SK-N-SH (cell line): ENCODE measurements at regions of chr2 and their contacts with region 1.

Region 1: GRCh38 chr2:198127627-198128026 is 323.2 kb downstream of the PLCL1 start:
- DNase-seq: peak; percentile 26
- H3K4me3 ChIP-seq: no peak overlapping the region
- H3K27ac ChIP-seq: no peak overlapping the region
- H3K4me1 ChIP-seq: no peaks in the 10 kb centered on the region; a peak in 2 of 4 replicates
- H3K27me3 ChIP-seq: no peaks in the 10 kb centered on the region
- CTCF ChIP-seq: peak; percentile 73
- EP300 ChIP-seq: no peak
- RAD21 ChIP-seq: peak; percentile 92

Region 2: DNA sequence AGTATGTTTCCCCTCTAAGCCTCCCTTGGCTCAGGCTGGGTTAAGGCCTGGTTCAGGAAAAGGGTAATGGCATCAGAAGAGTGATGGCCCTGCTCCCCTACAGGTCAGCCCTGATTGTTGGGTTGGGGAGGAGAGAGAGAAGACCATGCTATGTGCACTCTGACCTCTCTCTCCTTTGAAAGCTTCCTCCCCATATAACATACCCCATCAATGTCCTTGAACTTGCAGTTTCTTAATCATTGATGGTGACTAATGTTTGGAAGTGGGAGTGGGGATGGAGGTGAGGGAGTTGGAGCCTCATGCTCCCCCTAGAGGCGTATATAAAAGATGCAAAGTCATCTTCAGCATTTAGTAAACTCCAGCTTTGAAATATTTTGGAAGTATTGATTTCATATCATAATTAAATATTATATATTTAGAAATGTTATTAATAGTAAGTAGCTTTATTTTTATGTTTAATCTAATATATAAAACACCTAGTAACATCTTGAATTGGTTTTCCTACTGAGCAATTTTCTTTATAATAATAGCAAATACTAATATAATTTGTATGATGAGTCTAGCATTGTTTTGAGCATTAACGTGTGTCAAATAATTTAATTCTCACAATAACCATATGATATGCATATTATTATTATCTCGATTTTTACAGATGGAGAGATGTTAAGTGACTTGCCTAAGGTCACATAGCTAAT is 314.4 kb before region 1 on chr2:
- CTCF ChIA-PET with region 1: interaction called, 15 read pairs
- POLR2A ChIA-PET with region 1: no interaction called
- DNase-seq: peak; percentile 36
- H3K4me3 ChIP-seq: no peak overlapping the region
- H3K27ac ChIP-seq: no peak overlapping the region
- H3K4me1 ChIP-seq: no peaks in the 10 kb centered on the region
- H3K27me3 ChIP-seq: no peaks in the 10 kb centered on the region
- CTCF ChIP-seq: peak; percentile 65
- EP300 ChIP-seq: no peak
- RAD21 ChIP-seq: peak; percentile 35; the same call in 1 of the 2 replicates

Region 3: GRCh38 chr2:198116756-198117155 is 10.9 kb before region 1 on chr2:
- CTCF ChIA-PET with region 1: interaction called, 27 read pairs
- POLR2A ChIA-PET with region 1: no interaction called
- DNase-seq: no peak
- H3K4me3 ChIP-seq: no peak overlapping the region
- H3K27ac ChIP-seq: peak overlapping the region in 1 of 2 experiments; percentile 65; a peak in 2 of 4 replicates
- H3K4me1 ChIP-seq: peaks cover 11 to 15% of the 10 kb centered on the region in 2 experiments
- H3K27me3 ChIP-seq: no peaks in the 10 kb centered on the region
- CTCF ChIP-seq: no peak
- EP300 ChIP-seq: no peak
- RAD21 ChIP-seq: no peak

Region 4: DNA sequence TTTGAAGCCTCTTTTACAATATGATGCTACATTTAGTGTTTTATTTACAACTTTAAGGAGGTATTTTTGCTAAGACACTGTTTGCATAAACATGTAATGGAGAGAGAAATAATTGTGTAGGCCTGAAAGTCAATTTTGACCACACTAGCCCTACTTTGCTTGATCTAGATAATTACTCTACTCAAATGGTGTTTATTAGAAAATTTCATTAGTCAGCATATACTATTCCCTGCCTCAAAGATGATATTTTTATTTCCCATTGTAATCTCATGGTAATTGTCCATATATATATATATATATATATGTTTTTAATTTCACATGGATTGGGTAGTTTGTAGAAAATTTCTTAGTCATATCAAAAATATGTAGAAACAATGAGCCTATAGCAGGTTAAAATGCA is 697.9 kb after region 1 on chr2:
- CTCF ChIA-PET with region 1: no interaction called
- POLR2A ChIA-PET with region 1: no interaction called
- DNase-seq: no peak
- H3K4me3 ChIP-seq: no peak overlapping the region
- H3K27ac ChIP-seq: no peak overlapping the region
- H3K4me1 ChIP-seq: no peaks in the 10 kb centered on the region
- H3K27me3 ChIP-seq: no peaks in the 10 kb centered on the region
- CTCF ChIP-seq: no peak
- EP300 ChIP-seq: no peak
- RAD21 ChIP-seq: no peak